ENCODE measurements at regions of chr17 and their contacts with region 1.

Region 1: DNA sequence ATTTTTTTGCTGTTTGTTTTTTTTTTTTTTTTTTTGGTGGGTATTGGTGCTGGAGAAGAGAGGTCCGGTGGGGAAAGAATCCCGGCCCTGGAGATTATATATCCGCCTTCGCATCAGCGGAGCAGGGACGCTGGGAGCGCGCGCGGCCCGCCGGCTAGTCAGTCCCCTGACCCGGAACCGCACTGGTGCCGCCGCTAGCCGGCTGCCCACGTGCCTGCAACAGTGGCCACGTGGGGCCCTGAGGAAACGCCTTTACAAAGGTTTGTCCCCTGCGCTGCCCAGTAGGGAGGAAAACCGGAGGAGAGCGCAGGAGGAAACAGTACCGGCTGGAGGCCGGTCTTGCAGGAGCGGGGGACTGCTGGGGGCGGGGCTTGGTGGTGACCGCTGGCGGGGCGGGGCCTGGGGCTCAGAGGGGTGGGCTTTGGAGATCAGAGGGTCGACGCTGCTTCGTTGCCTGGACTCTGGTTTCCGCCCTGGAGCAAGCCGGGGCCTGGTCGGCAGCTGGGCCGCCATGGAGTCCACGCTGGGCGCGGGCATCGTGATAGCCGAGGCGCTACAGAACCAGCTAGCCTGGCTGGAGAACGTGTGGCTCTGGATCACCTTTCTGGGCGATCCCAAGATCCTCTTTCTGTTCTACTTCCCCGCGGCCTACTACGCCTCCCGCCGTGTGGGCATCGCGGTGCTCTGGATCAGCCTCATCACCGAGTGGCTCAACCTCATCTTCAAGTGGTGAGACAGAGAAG is at the start of gene G6PC3:
- DNase-seq: peak; percentile 96
- H3K4me3 ChIP-seq: peak within 1 kb of the TSS; percentile 63 to 90 (median 71)
- H3K27ac ChIP-seq: peak within 1 kb of the TSS; percentile 87
- H3K4me1 ChIP-seq: peaks cover 13% of the 10 kb centered on the region
- H3K27me3 ChIP-seq: no peaks in the 10 kb centered on the region
- CTCF ChIP-seq: peak in 1 of 2 donors; percentile 5
- total RNA-seq, gene G6PC3: 20.5 to 70.7 TPM

Region 2: GRCh38 chr17:44014437-44015172 is 56.0 kb before region 1 on chr17 and contains the start of gene TMEM101:
- CTCF ChIA-PET with region 1: no interaction called
- dilution Hi-C with region 1: no loop called
- in situ Hi-C with region 1: no loop called
- intact Hi-C with region 1: loop called (anchors 2 kb)
- DNase-seq: peak; percentile 83
- H3K4me3 ChIP-seq: peak within 1 kb of the TSS; percentile 89 to 99 (median 91)
- H3K27ac ChIP-seq: peak within 1 kb of the TSS; percentile 80
- H3K4me1 ChIP-seq: peaks cover 4% of the 10 kb centered on the region
- H3K27me3 ChIP-seq: no peaks in the 10 kb centered on the region
- CTCF ChIP-seq: no peak
- total RNA-seq, gene TMEM101: 24.4 to 39.0 TPM

Region 3: DNA sequence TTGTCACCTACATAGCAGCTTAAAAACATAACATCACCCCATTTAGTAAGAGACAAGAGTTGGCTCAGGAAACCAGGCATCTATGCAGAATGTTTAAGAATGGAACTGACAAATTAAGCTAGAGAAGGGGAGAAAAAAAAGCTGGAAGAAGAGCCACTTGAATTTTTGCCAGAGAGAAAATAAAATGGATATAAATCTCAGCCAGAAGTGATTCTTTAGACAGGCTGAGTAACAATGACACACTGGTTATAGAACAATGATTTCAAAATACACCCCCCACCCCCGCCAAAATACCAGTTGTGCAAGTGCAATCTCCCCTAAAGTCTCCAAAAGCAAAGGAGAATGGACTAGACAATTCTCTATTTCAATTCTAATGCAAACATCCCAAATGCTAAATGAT is 26.6 kb before region 1 on chr17:
- CTCF ChIA-PET with region 1: interaction called, 7 read pairs
- dilution Hi-C with region 1: no loop called
- in situ Hi-C with region 1: no loop called
- intact Hi-C with region 1: loop called (anchors 2 kb)
- DNase-seq: peak; percentile 33
- H3K4me3 ChIP-seq: no peak overlapping the region
- H3K27ac ChIP-seq: no peak overlapping the region
- H3K4me1 ChIP-seq: peaks cover 27% of the 10 kb centered on the region
- H3K27me3 ChIP-seq: no peaks in the 10 kb centered on the region
- CTCF ChIP-seq: no peak

Region 4: DNA sequence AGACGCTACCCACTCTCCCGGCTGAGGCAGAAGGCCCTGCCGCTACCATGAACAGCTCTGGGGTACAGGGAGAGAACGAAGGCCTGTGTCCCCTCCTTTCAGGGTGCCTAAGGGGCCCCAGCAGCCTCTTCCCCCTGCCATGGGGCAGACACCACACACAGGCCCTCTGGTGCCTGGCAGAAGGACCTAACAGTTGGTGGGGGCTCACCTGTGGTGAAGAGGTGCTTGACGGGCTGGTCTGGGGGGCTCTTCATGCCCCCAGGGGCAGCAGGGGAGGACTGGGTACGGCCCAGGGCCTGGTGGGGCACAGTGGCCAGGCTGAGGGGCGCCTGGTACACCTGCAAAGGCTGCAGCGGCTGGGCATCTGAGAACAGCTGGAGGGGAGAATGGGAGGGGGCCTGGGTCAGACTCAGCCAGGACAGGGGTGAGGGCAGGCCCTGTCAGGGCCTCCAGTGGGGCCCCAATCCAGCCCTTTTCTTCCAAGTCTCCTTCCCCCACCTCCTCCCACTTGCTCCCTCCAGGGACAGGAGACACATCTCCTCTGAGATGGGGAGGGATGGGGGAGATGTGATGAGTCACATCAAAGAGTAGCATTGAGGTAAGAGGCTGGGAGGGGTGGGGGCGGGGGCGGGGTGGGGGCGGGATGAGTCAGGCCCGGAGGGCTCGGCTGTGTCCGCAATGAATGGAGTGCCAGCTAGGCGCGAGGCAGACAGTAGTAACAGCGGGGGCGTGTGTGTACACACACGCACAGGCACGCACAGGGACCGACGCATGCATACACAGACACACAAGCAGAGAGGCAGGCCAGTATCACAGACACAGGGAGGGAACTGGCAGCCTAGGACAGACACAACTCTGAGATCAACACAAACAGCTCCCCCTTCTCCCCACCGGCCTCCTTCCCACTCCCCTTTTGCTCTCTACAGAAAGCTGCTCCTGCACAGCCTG is 16.0 kb after region 1 on chr17:
- CTCF ChIA-PET with region 1: interaction called, 23 read pairs
- dilution Hi-C with region 1: no loop called
- in situ Hi-C with region 1: no loop called
- intact Hi-C with region 1: loop called (anchors 1 kb)
- DNase-seq: peak; percentile 88
- H3K4me3 ChIP-seq: no peak overlapping the region
- H3K27ac ChIP-seq: peak overlapping the region; percentile 56
- H3K4me1 ChIP-seq: peaks cover 27% of the 10 kb centered on the region
- H3K27me3 ChIP-seq: no peaks in the 10 kb centered on the region
- CTCF ChIP-seq: no peak

Region 5: GRCh38 chr17:44115585-44116415 is 45.2 kb after region 1 on chr17:
- CTCF ChIA-PET with region 1: no interaction called
- dilution Hi-C with region 1: no loop called
- in situ Hi-C with region 1: no loop called
- intact Hi-C with region 1: loop called (anchors 2 kb)
- DNase-seq: no peak
- H3K4me3 ChIP-seq: no peak overlapping the region
- H3K27ac ChIP-seq: no peak overlapping the region
- H3K4me1 ChIP-seq: peaks cover 14% of the 10 kb centered on the region
- H3K27me3 ChIP-seq: no peaks in the 10 kb centered on the region
- CTCF ChIP-seq: peak; percentile 70 to 78

Region 6: GRCh38 chr17:44123356-44124117 is 52.9 kb after region 1 on chr17 and contains the start of gene HDAC5:
- CTCF ChIA-PET with region 1: interaction called, 11 read pairs
- dilution Hi-C with region 1: no loop called
- in situ Hi-C with region 1: no loop called
- intact Hi-C with region 1: no loop called
- DNase-seq: peak; percentile 89
- H3K4me3 ChIP-seq: peak within 1 kb of the TSS; percentile 62 to 67 (median 65)
- H3K27ac ChIP-seq: peak within 1 kb of the TSS; percentile 90
- H3K4me1 ChIP-seq: peaks cover 18% of the 10 kb centered on the region
- H3K27me3 ChIP-seq: no peaks in the 10 kb centered on the region
- CTCF ChIP-seq: peak; percentile 36 to 75
- total RNA-seq, gene HDAC5: 9.9 to 21.8 TPM

Region 7: DNA sequence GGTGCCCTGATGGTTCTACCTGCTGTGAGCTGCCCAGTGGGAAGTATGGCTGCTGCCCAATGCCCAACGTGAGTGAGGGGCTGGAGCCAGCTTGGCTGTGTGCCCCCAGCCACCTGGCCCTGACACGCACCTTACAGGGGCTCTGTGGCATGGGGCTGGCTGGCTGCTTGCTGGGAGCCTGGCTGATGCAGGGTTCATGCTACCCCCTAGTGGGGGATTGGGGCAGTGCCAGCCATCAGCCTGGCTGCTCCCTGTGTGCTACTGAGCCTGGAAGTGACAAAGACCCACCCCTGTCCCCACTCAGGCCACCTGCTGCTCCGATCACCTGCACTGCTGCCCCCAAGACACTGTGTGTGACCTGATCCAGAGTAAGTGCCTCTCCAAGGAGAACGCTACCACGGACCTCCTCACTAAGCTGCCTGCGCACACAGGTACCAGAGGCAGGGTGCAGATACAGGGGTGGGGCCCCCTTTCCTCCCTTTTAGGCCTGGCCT is 280.2 kb after region 1 on chr17:
- CTCF ChIA-PET with region 1: no interaction called
- dilution Hi-C with region 1: no loop called
- in situ Hi-C with region 1: no loop called
- intact Hi-C with region 1: loop called (anchors 1 kb)
- DNase-seq: peak; percentile 32
- H3K4me3 ChIP-seq: no peak overlapping the region
- H3K27ac ChIP-seq: no peak overlapping the region
- H3K4me1 ChIP-seq: peaks cover 26% of the 10 kb centered on the region
- H3K27me3 ChIP-seq: no peaks in the 10 kb centered on the region
- CTCF ChIP-seq: peak; percentile 71 to 86

Region 8: DNA sequence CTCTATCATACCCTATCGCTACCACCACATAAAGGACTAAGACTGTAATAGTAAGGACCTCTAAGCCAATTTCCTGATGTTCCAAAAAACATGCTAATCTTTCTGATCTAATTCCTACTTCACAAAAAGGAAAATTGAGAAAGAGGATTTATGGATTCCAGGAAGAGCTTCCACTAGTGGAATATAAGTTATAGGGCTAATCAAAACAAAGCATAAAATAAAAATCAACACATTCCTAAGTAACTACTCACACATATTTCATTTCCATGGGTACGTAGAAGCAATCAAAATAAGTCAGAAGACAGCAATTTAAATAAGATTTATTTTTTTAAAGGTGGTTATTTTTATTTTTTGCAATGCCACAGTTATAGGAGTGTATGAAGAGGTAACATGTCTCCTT is 606.5 kb after region 1 on chr17:
- CTCF ChIA-PET with region 1: no interaction called
- dilution Hi-C with region 1: no loop called
- in situ Hi-C with region 1: no loop called
- intact Hi-C with region 1: no loop called
- DNase-seq: no peak
- H3K4me3 ChIP-seq: no peak overlapping the region
- H3K27ac ChIP-seq: no peak overlapping the region
- H3K4me1 ChIP-seq: no peaks in the 10 kb centered on the region
- H3K27me3 ChIP-seq: no peaks in the 10 kb centered on the region
- CTCF ChIP-seq: no peak